ENCODE measurements at regions of chr2 and their contacts with region 1.

Region 1: GRCh38 chr2:38685116-38685735 is 19.3 kb downstream of the GALM start:
- DNase-seq: no peak
- H3K4me3 ChIP-seq: no peak overlapping the region
- H3K4me3 Mint-ChIP-seq: peak overlapping the region in 6 of 7 donors; percentile 29 to 61 (median 46)
- H3K27ac ChIP-seq: no peak overlapping the region
- H3K27ac Mint-ChIP-seq: peak overlapping the region; percentile 61 to 97 (median 89)
- H3K4me1 ChIP-seq: peaks cover 30% of the 10 kb centered on the region
- H3K4me1 Mint-ChIP-seq: peaks cover 37 to 70% (median 69%) of the 10 kb centered on the region in 3 donors
- H3K27me3 ChIP-seq: no peaks in the 10 kb centered on the region
- H3K27me3 Mint-ChIP-seq: no peaks in the 10 kb centered on the region

Region 2: DNA sequence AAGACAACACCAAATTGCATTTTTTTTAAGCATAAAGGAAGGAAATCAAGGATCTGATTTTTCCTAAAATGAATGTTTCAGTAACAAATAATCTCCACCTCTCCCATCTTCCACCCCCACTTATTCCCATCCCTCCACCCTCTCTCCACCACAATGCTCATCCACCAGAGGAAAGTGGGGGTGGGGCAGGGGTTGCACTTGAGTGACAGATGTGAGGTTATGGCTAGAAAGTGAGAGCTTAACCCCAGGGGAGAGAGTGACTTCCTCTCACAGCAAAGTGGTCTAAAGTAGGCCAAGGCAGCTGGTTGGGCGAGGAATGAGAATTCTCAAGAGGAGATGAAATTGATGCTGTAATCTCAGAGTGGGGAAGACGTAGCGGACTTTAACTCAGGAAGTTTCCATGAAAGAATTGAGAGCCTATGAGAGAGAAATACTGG is 187.2 kb before region 1 on chr2:
- CTCF ChIA-PET with region 1: no interaction called
- POLR2A ChIA-PET with region 1: no interaction called
- DNase-seq: no peak
- H3K4me3 ChIP-seq: no peak overlapping the region
- H3K4me3 Mint-ChIP-seq: peak overlapping the region in 1 of 7 donors; percentile 67
- H3K27ac ChIP-seq: no peak overlapping the region
- H3K27ac Mint-ChIP-seq: peak overlapping the region in 1 of 8 donors; percentile 18
- H3K4me1 ChIP-seq: no peaks in the 10 kb centered on the region
- H3K4me1 Mint-ChIP-seq: peaks cover 7 to 8% (median 8%) of the 10 kb centered on the region in 3 donors
- H3K27me3 ChIP-seq: no peaks in the 10 kb centered on the region
- H3K27me3 Mint-ChIP-seq: peaks cover 9 to 22% of the 10 kb centered on the region in 2 donors

Region 3: GRCh38 chr2:38672445-38673391 is 12.5 kb before region 1 on chr2:
- CTCF ChIA-PET with region 1: interaction called, 16 read pairs
- POLR2A ChIA-PET with region 1: interaction called, 25 read pairs
- DNase-seq: no peak
- H3K4me3 ChIP-seq: no peak overlapping the region
- H3K4me3 Mint-ChIP-seq: peak overlapping the region in 5 of 7 donors; percentile 20 to 59 (median 53)
- H3K27ac ChIP-seq: no peak overlapping the region
- H3K27ac Mint-ChIP-seq: peak overlapping the region; percentile 57 to 92 (median 82)
- H3K4me1 ChIP-seq: peaks cover 33% of the 10 kb centered on the region
- H3K4me1 Mint-ChIP-seq: peaks cover 59 to 83% (median 80%) of the 10 kb centered on the region in 3 donors
- H3K27me3 ChIP-seq: no peaks in the 10 kb centered on the region
- H3K27me3 Mint-ChIP-seq: no peaks in the 10 kb centered on the region

Region 4: DNA sequence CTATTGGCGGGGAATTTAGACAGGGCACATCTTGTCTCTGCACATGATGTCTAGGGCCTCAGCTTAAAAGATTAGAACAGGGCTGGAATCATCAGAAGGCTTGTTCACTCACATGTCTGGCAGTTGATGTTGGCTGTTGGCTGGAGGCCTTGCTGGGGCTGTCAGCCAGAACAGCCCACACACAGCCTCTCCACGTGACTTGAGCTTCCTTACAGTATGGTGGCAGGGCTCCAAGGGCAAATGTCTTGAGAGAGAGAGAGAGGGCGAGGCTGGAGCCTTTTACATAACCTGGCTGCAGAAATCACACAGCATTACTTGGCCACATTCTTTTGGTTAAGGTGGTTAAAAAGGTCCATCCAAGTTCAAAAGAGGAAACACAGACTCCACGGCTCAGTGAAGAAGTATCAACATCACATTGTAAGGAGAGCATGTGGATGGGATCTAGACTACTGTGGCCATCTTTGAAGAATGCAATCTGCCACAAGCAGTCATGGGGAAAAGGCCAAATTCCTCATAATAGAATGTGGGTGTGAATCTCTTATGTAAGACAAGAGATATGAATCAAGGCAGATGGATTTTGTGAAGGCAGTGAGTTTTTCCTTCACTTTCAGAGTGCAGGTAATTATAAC is 35.5 kb after region 1 on chr2:
- CTCF ChIA-PET with region 1: interaction called, 16 read pairs
- POLR2A ChIA-PET with region 1: no interaction called
- DNase-seq: no peak
- H3K4me3 ChIP-seq: no peak overlapping the region
- H3K4me3 Mint-ChIP-seq: peak overlapping the region in 3 of 7 donors; percentile 4 to 12 (median 6)
- H3K27ac ChIP-seq: no peak overlapping the region
- H3K27ac Mint-ChIP-seq: peak overlapping the region; percentile 65 to 94 (median 84)
- H3K4me1 ChIP-seq: peaks cover 19% of the 10 kb centered on the region
- H3K4me1 Mint-ChIP-seq: peaks cover 42 to 64% (median 58%) of the 10 kb centered on the region in 3 donors
- H3K27me3 ChIP-seq: no peaks in the 10 kb centered on the region
- H3K27me3 Mint-ChIP-seq: no peaks in the 10 kb centered on the region

Measured in CD8-positive, alpha-beta memory T cell (primary cell).